HAP-1 (cell line): ENCODE measurements at regions of chr4 and their contacts with region 1.

Region 1: DNA sequence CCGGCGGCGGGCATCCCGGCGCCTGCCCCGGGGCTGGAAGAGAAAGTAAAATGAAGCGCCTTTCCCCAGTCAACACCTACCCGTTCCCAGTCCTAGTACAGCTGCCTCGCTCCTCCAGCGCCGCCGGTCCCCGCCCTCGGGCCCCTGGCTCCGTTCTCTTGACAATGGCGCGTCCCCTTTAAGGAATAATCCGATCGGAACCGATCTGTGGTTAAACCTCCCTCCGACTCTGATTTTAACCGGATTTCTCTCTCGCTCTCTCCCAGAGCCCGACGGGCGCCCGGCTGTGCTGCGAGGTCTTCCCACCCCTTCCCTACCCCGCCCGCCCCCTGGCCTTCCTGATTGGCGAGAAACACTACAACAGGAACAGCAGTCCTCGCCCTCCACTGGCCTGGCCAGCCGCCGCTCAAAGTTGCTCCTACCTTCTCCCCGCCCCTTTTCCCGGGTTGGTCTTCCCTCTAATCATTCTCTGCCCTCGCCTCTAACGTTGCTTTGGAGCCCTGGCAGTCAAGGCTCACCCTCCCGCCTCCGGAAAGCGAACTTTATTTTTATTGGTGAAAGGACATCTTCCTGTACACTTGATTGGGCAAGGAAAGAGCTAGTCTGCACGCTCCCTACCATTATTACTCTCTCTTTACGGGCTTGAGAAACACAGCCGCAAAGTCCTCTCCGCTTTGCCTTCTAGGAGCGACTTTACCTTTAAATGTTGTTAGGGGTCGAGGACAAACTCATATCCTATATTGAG is at the start of gene FRYL:
- DNase-seq: peak; percentile 100
- H3K4me3 ChIP-seq: peak within 1 kb of the TSS; percentile 80
- H3K4me1 ChIP-seq: peaks cover 27% of the 10 kb centered on the region
- H3K27me3 ChIP-seq: no peaks in the 10 kb centered on the region

Region 2: DNA sequence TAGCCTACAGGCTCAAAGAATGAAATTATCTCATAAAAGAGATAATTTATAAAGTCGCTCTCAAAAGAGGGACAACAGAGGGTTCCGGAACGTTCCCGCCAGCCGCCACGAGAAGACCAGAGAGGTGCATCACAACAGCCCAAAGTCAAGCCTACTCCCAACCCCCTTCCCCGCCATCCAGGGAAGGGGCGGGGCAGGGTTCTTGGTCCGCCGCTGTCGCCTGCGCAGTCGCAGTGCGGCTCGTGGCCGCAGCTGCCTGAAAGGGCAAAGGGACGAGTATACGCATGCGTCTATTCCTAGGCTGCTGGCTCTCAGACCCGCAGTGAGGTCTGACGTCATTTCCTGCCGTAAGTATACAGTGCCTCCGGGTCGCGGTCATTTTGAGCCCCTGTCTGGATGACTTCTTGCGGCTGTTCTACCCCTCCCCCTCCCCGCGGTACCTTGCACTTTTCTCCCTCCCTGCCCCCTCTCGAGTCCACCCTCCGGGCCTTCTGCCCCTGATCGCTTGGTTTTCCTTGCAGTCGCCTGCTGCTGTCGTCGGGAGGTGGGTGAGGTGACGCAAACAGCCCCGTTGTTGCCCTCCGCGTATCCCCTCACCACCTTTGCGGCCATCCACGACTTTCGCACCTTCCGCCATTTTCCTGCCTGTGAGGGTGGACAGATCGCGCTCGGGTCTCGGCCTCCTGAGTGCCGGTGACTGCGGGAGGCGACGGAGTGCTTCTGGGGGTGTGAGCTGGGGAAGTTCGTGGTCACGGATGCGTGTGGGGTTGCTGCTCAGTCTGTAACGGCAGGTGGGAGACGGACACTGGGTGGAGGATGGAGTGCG is 50.7 kb after region 1 on chr4 and contains the start of gene OCIAD1:
- in situ Hi-C with region 1: loop called (anchors 10 kb)
- DNase-seq: peak; percentile 97 to 100
- H3K4me3 ChIP-seq: peak within 1 kb of the TSS; percentile 84
- H3K4me1 ChIP-seq: peaks cover 12% of the 10 kb centered on the region
- H3K27me3 ChIP-seq: no peaks in the 10 kb centered on the region

Region 3: GRCh38 chr4:49000806-49001205 is 220.6 kb after region 1 on chr4:
- in situ Hi-C with region 1: no loop called
- DNase-seq: no peak
- H3K4me3 ChIP-seq: no peak overlapping the region
- H3K4me1 ChIP-seq: no peaks in the 10 kb centered on the region
- H3K27me3 ChIP-seq: peaks cover 2% of the 10 kb centered on the region; the same call in 1 of the 2 replicates